Sigmoid colon (tissue), 7 donors: ENCODE measurements at regions of chr5 and their contacts with region 1.

Region 1: GRCh38 chr5:141691867-141692532 is 10.0 kb upstream of the ARAP3 start:
- DNase-seq: peak; percentile 88
- H3K4me3 ChIP-seq: peak overlapping the region in 3 of 4 donors; percentile 20 to 38 (median 20)
- H3K27ac ChIP-seq: no peak overlapping the region
- H3K4me1 ChIP-seq: peaks cover 0 to 8% (median 8%) of the 10 kb centered on the region in 4 donors
- H3K27me3 ChIP-seq: peaks cover 0 to 14% (median 10%) of the 10 kb centered on the region in 3 donors
- CTCF ChIP-seq: peak; percentile 88 to 99 (median 94)
- EP300 ChIP-seq: no peak
- POLR2A ChIP-seq: no peak

Region 2: GRCh38 chr5:140587495-140587894 is 1104.5 kb before region 1 on chr5:
- intact Hi-C with region 1: no loop called
- DNase-seq: no peak
- H3K4me3 ChIP-seq: no peak overlapping the region
- H3K27ac ChIP-seq: peak overlapping the region in 1 of 4 donors; percentile 20
- H3K4me1 ChIP-seq: no peaks in the 10 kb centered on the region
- H3K27me3 ChIP-seq: no peaks in the 10 kb centered on the region
- CTCF ChIP-seq: no peak
- EP300 ChIP-seq: no peak
- POLR2A ChIP-seq: no peak

Region 3: GRCh38 chr5:141960449-141961202 is 268.6 kb after region 1 on chr5:
- intact Hi-C with region 1: loop called (anchors 2 kb)
- DNase-seq: peak; percentile 93
- H3K4me3 ChIP-seq: no peak overlapping the region
- H3K27ac ChIP-seq: peak overlapping the region in 1 of 4 donors; percentile 22
- H3K4me1 ChIP-seq: peaks cover 0 to 15% (median 0%) of the 10 kb centered on the region in 4 donors
- H3K27me3 ChIP-seq: no peaks in the 10 kb centered on the region
- CTCF ChIP-seq: peak; percentile 67 to 81 (median 74)
- EP300 ChIP-seq: no peak
- POLR2A ChIP-seq: no peak

Region 4: GRCh38 chr5:142108432-142109330 is 416.7 kb after region 1 on chr5 and contains the start of gene NDFIP1:
- intact Hi-C with region 1: loop called (anchors 10 kb)
- DNase-seq: peak; percentile 91
- H3K4me3 ChIP-seq: peak within 1 kb of the TSS; percentile 60 to 77 (median 71)
- H3K27ac ChIP-seq: peak within 1 kb of the TSS; percentile 96 to 97 (median 96)
- H3K4me1 ChIP-seq: peaks cover 0 to 29% (median 18%) of the 10 kb centered on the region in 4 donors
- H3K27me3 ChIP-seq: no peaks in the 10 kb centered on the region
- CTCF ChIP-seq: peak in 1 of 4 experiments; percentile 21
- EP300 ChIP-seq: no peak
- POLR2A ChIP-seq: peak; percentile 43 to 51
- total RNA-seq, gene NDFIP1: 47.8 to 88.5 (median 64.0) TPM